ENCODE measurements at regions of chr5 and their contacts with region 1.

Region 1: DNA sequence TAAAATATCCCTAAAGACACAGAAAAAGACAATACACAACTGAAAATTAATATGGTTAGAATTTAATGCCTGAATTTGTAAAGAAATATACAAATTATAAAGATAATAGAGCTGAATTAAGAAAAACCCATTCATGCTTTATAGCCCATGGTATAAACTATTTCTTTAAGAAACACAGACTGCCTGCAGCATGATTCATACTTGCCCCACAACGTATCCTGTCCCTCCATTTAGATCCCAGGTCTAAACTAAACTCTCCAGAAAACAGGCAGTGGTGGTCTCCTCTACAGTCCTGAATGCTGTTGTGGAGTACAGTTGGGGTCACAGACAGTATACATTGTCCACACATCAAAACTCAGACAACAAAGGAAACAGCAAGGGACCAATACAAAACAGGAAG is 24.8 kb downstream of the IL6ST start:
- DNase-seq: no peak
- ATAC-seq: no peak
- H3K4me3 ChIP-seq: no peak overlapping the region
- H3K27ac ChIP-seq: no peak overlapping the region
- H3K4me1 ChIP-seq: no peaks in the 10 kb centered on the region
- H3K27me3 ChIP-seq: no peaks in the 10 kb centered on the region
- CTCF ChIP-seq: no peak

Region 2: DNA sequence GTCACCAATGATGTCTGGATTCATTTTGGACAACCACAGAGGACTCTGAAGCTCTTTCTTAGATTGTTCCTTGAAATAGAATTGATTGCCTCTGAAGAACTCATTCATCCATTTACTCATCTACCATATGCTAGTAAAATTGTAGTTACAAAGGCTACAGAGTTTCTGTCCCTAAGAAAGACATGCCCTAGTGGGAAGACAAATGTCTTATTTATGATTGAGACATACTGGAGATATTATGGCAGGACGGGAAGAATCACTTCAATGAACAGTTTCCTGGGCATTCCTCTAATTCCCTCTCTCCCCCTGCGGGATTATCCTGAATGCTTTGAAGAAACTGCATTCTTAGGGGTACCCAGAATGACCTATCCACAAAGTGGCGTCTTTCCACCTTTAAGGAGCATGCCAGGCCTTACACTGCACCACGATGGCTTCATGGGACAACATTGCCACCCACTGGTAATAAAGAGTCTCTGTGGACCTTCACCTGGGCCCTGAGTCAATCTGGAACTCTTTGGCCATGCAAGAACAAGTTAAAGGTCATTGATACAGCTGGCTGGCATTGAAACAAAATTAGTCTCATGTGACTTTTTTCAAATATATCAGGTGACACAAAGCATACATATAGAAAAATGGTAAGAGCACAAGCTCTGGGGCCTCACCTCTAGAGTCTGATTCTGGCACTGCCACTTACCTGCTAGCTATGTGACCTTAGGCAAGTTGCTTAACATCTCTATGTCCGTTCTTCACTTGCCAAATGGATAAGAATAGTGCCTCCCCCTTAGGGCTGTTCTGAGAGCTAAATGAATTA is 231.1 kb after region 1 on chr5:
- intact Hi-C with region 1: loop called in 1 of 3 experiments (anchors 10 kb)
- DNase-seq: peak in 5 of 6 donors; percentile 46 to 81 (median 71)
- ATAC-seq: peak; percentile 99 to 100 (median 100)
- H3K4me3 ChIP-seq: no peak overlapping the region
- H3K27ac ChIP-seq: no peak overlapping the region
- H3K4me1 ChIP-seq: peaks cover 0 to 6% (median 0%) of the 10 kb centered on the region in 3 donors
- H3K27me3 ChIP-seq: no peaks in the 10 kb centered on the region
- CTCF ChIP-seq: peak; percentile 39 to 77 (median 74)

Region 3: GRCh38 chr5:56211298-56211865 is 241.4 kb after region 1 on chr5:
- intact Hi-C with region 1: loop called in 2 of 3 experiments (anchors 10 kb)
- DNase-seq: peak in 3 of 6 donors; percentile 13 to 29 (median 25)
- ATAC-seq: peak; percentile 61 to 88 (median 76)
- H3K4me3 ChIP-seq: no peak overlapping the region
- H3K27ac ChIP-seq: no peak overlapping the region
- H3K4me1 ChIP-seq: peaks cover 0 to 5% (median 0%) of the 10 kb centered on the region in 3 donors
- H3K27me3 ChIP-seq: no peaks in the 10 kb centered on the region
- CTCF ChIP-seq: no peak

Measured in pancreas (tissue), 10 donors.